Panc1 (cell line): ENCODE measurements at regions of chr10 and their contacts with region 1.

Region 1: GRCh38 chr10:24311888-24312287 is 103.0 kb downstream of the KIAA1217 start:
- DNase-seq: no peak
- ATAC-seq: no peak
- H3K4me3 ChIP-seq: no peak overlapping the region
- H3K27ac ChIP-seq: no peak overlapping the region
- H3K4me1 ChIP-seq: no peaks in the 10 kb centered on the region
- H3K27me3 ChIP-seq: no peaks in the 10 kb centered on the region
- CTCF ChIP-seq: no peak

Region 2: GRCh38 chr10:24162206-24162985 is 149.5 kb before region 1 on chr10:
- CTCF ChIA-PET with region 1: interaction called, 11 read pairs
- POLR2A ChIA-PET with region 1: no interaction called
- in situ Hi-C with region 1: no loop called
- intact Hi-C with region 1: no loop called
- DNase-seq: no peak
- ATAC-seq: no peak
- H3K4me3 ChIP-seq: no peak overlapping the region
- H3K27ac ChIP-seq: no peak overlapping the region
- H3K4me1 ChIP-seq: no peaks in the 10 kb centered on the region
- H3K27me3 ChIP-seq: no peaks in the 10 kb centered on the region
- CTCF ChIP-seq: no peak

Region 3: DNA sequence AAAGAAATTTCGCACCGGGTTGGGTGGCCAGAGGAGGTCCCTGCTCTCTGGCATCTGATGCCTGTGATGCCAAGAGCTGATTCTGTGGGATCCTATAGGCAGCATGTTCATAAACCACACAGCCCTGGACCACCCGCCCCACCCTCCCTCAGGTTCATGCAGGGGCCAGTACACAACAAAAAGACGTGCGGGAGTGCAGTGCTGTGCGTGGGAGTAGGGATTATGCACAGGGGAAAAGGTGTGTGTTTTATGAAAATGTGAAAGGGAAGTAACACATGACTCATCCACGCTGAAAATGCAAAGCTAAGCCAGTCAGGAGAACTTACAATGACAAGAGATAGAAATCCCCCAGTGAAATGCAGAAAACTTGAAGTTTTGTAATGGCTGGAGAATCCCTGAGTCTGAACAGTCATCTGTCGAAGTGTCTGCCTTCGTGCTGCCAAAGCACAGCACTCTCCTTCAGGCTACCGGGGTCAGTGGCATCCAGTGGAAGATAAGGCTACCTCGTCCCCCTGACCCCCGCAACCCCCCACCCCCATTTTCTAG is 101.9 kb before region 1 on chr10:
- CTCF ChIA-PET with region 1: interaction called, 11 read pairs
- POLR2A ChIA-PET with region 1: no interaction called
- in situ Hi-C with region 1: no loop called
- intact Hi-C with region 1: no loop called
- DNase-seq: no peak
- ATAC-seq: peak; percentile 61
- H3K4me3 ChIP-seq: peak overlapping the region; percentile 47 to 54
- H3K27ac ChIP-seq: peak overlapping the region; percentile 61; the same call in 1 of the 2 replicates
- H3K4me1 ChIP-seq: peaks cover 13% of the 10 kb centered on the region
- H3K27me3 ChIP-seq: no peaks in the 10 kb centered on the region
- CTCF ChIP-seq: no peak